Right ventricle myocardium inferior (tissue), 1 donor: ENCODE measurements at regions of chr17 and their contacts with region 1.

Region 1: GRCh38 chr17:64420143-64420971 is 28.6 kb upstream of the MILR1 start:
- DNase-seq: no peak
- ATAC-seq: peak; percentile 80

Region 2: GRCh38 chr17:64306850-64307463 is 113.4 kb before region 1 on chr17:
- intact Hi-C with region 1: loop called (anchors 1 kb)
- DNase-seq: peak; percentile 79
- ATAC-seq: peak; percentile 65

Region 3: GRCh38 chr17:64320613-64321553 is 99.5 kb before region 1 on chr17:
- intact Hi-C with region 1: loop called (anchors 1 kb)
- DNase-seq: peak; percentile 71
- ATAC-seq: peak; percentile 75

Region 4: GRCh38 chr17:64491034-64491859 is 70.9 kb after region 1 on chr17:
- intact Hi-C with region 1: loop called (anchors 5 kb)
- DNase-seq: no peak
- ATAC-seq: no peak

Region 5: GRCh38 chr17:64648234-64648633 is 227.9 kb after region 1 on chr17:
- intact Hi-C with region 1: loop called (anchors 5 kb)
- DNase-seq: no peak
- ATAC-seq: no peak